HEK293 (cell line): ENCODE measurements at regions of chr7 and their contacts with region 1.

Region 1: DNA sequence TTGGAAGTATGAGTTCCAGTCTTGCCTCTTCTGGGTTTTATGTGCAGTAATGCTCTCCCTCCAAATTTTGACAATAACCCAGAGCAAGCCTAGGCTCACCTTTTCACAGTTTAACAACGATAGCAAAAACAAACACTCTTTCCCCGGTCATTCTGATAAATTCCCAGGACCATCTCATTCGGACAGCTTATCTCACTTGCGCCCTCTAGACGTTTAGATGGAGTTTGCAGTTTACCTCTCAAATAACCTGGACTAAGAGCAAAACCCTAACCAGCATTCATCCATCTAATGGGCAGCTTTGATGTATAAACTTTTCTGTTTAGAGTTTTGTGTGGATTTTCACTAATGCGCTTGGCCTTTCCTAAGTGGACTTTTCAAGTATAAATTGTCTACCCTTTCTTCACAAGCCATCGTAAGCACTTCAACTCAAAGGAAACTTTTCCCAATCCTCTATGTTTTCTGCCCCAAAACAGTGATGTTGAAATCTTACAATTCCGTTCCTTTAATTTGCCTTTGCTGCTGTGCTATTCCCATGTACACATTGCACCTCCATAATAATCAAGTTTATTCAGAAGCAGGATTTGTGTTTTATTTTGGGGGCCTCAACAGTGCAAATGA is 114.9 kb downstream of the HDAC9 start:
- H3K4me3 ChIP-seq: no peak overlapping the region
- H3K27ac ChIP-seq: no peak overlapping the region
- H3K4me1 ChIP-seq: no peaks in the 10 kb centered on the region
- CTCF ChIP-seq: no peak

Region 2: GRCh38 chr7:18590744-18591340 is 19.6 kb before region 1 on chr7:
- CTCF ChIA-PET with region 1: interaction called, 17 read pairs
- POLR2A ChIA-PET with region 1: no interaction called
- H3K4me3 ChIP-seq: no peak overlapping the region
- H3K27ac ChIP-seq: no peak overlapping the region
- H3K4me1 ChIP-seq: no peaks in the 10 kb centered on the region
- CTCF ChIP-seq: no peak

Region 3: GRCh38 chr7:18727115-18727870 is 116.9 kb after region 1 on chr7:
- CTCF ChIA-PET with region 1: no interaction called
- POLR2A ChIA-PET with region 1: no interaction called
- H3K4me3 ChIP-seq: no peak overlapping the region
- H3K27ac ChIP-seq: no peak overlapping the region
- H3K4me1 ChIP-seq: no peaks in the 10 kb centered on the region
- CTCF ChIP-seq: no peak